ENCODE measurements at regions of chr20 and their contacts with region 1.

Region 1: DNA sequence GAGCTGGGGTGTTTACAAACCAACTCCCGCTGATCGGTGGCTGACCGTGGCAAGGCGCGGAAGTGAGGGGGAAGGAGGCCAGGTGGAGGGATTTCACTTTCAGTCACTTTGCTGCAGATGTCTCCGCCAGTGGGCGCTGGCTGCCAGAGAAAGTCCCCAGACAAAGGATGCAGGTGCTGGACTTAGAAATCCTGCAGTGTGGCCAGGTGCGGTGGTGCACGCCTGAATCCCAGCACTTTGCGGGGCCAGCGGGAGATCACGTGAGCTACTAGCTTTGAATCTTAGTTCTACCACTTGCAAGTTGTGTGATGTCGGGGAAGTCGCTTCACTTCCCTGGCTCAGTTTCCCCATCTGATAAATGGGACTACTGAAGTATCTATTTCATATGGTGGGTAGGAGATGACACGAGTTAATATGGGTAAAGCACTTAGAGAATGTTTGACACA is 180.4 kb downstream of the ZNF217 start:
- DNase-seq: peak; percentile 24
- H3K4me3 Mint-ChIP-seq: no peak overlapping the region
- H3K27ac Mint-ChIP-seq: no peak overlapping the region
- H3K4me1 Mint-ChIP-seq: peaks cover 7% of the 10 kb centered on the region
- H3K27me3 Mint-ChIP-seq: no peaks in the 10 kb centered on the region

Region 2: GRCh38 chr20:53547664-53548239 is 134.5 kb after region 1 on chr20:
- intact Hi-C with region 1: loop called (anchors 1 kb)
- DNase-seq: peak; percentile 24
- H3K4me3 Mint-ChIP-seq: no peak overlapping the region
- H3K27ac Mint-ChIP-seq: no peak overlapping the region
- H3K4me1 Mint-ChIP-seq: no peaks in the 10 kb centered on the region
- H3K27me3 Mint-ChIP-seq: no peaks in the 10 kb centered on the region

Region 3: DNA sequence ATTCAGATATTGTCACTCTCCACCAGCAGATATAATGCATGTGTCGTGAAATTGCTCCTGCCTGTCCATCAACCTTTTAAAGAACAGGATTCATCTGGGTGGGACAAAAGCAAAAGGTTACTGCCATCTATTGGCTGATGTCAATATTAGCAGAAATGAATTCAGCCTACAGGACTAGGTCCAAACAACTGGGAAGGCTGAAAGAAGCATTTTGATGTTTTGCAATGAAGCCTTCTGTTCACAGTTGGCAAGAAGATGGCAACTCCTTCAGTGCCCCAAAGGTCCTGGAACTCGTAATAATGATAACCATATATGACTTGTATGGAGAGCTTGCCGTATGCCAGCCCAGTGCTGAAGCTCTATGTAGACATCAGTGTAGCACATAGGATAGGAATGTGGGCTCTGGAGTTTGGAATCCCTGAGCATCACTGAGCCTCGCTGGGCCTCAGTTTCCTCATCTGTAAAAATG is 649.6 kb after region 1 on chr20:
- intact Hi-C with region 1: loop called (anchors 5 kb)
- DNase-seq: no peak
- H3K4me3 Mint-ChIP-seq: no peak overlapping the region
- H3K27ac Mint-ChIP-seq: no peak overlapping the region
- H3K4me1 Mint-ChIP-seq: peaks cover 9% of the 10 kb centered on the region
- H3K27me3 Mint-ChIP-seq: peaks cover 2% of the 10 kb centered on the region